Mammary epithelial cell (primary cell): ENCODE measurements at regions of chr5 and their contacts with region 1.

Region 1: DNA sequence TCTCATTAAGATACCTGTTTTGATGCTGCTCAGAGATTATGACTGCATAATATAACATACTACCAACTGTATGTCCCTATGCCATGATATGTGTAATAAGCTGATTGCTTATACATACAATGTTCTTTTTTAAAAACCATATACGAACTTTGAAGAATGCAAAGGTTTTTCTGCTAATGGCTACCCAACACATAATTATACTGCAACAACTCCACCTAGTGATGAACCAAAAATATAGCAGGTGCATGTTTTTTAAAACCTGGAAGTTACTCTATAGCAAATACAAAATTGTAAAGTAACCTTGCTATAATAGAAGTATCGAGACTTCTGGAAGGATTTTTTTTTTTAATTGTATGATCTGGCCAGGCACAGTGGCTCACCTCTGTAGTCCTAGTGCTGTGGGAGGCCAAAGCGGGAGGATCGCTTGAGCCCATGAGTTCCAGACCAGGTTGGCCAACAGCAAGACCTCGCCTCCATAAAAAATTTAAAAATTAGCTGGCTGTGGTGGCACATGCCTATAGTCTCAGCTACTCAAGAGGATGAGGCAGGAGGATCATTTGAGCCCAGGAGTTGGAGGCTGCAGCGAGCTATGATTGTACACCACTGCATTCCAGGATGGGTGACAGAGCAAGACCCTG is 49.1 kb downstream of the HOMER1 start:
- DNase-seq: peak; percentile 2
- H3K4me3 ChIP-seq: no peak overlapping the region
- H3K27ac ChIP-seq: no peak overlapping the region
- H3K4me1 ChIP-seq: no peaks in the 10 kb centered on the region
- H3K27me3 ChIP-seq: no peaks in the 10 kb centered on the region
- CTCF ChIP-seq: peak; percentile 51 to 66

Region 2: DNA sequence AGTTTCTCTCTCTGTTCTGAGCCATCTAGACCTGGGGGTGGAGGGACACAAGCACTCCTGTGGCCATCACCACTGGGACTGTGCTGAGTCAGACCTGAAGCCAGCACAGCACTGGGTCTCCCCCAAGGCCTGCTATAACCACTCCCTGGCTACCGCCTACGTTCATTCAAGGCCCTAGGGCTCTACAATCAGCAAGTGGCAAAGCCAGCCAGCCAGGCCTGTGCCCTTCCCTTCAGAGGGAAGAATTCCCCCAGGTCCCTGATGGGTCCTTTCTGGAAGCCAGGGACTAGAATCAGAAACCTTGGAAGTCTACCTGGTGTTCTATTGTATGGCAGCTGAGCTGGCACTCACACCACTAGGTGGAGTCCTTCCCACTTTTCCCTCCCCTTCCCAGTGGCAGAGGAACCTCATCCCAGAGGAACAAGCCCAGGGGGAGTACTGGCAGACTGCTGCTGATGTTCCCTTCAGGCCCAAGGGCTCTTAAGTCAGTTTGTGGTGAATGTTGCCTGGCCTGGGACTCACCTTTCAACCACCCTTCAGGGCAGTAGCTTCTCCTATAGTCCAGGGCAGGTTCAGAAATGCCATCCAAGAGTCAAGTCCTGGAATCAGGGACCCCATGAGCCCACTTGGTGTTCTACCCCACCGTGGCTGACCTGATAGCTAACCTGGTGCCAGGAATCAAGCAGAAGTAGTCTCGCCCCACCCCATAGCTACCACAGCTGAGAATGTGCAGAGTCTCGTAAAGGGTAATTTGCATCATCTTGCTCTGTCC is 208.8 kb before region 1 on chr5:
- CTCF ChIA-PET with region 1: no interaction called
- dilution Hi-C with region 1: no loop called
- in situ Hi-C with region 1: loop called (anchors 10 to 25 kb)
- intact Hi-C with region 1: loop called (anchors 1 kb)
- DNase-seq: peak; percentile 36
- H3K4me3 ChIP-seq: no peak overlapping the region
- H3K27ac ChIP-seq: no peak overlapping the region
- H3K4me1 ChIP-seq: peaks cover 16% of the 10 kb centered on the region
- H3K27me3 ChIP-seq: no peaks in the 10 kb centered on the region
- CTCF ChIP-seq: peak; percentile 47 to 78

Region 3: DNA sequence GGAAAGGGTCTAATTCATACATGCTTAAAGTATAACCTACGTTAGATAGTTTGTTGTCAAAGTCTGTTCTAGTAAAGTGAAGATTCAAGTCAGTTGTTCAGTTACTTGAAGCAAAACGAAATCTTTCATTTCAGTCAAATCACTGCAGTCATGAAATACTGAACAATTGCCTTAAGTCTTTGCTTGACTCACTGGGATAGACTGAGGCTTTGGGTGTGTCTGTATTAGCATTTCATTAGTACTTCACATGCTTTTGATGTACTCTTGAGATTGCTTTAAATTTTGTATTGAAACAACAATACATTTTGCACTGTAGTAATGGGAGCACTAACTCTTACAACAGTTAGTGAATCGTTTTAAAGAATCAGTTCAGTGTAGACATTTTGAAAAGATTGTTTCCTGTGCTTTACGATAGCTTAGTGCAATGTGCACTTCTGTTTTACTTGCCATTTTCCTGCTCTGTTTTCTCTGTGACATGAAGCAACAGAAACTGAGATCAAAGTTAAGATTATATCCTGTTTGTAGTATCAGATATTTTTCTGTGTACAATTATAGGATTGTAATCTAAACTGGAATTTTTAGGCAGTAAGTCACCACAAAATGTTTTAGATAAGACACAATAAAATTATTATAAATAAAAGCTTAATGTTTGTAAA is 220.9 kb after region 1 on chr5:
- CTCF ChIA-PET with region 1: no interaction called
- dilution Hi-C with region 1: no loop called
- in situ Hi-C with region 1: no loop called
- intact Hi-C with region 1: no loop called
- DNase-seq: peak; percentile 38
- H3K4me3 ChIP-seq: no peak overlapping the region
- H3K27ac ChIP-seq: no peak overlapping the region
- H3K4me1 ChIP-seq: peaks cover 17% of the 10 kb centered on the region
- H3K27me3 ChIP-seq: no peaks in the 10 kb centered on the region
- CTCF ChIP-seq: no peak